Left cardiac atrium (tissue), 4 donors: ENCODE measurements at regions of chr1 and their contacts with region 1.

Region 1: GRCh38 chr1:207181838-207182237 is 77.8 kb downstream of the C4BPA start:
- DNase-seq: no peak
- ATAC-seq: peak in 1 of 2 donors; percentile 53

Region 2: GRCh38 chr1:207088731-207089626 is 92.9 kb before region 1 on chr1 and contains the start of gene C4BPB:
- intact Hi-C with region 1: no loop called
- DNase-seq: no peak
- ATAC-seq: peak in 1 of 2 donors; percentile 69
- total RNA-seq, gene C4BPB: 2.4 TPM in 1 of 2 donors, not detected in the other

Region 3: DNA sequence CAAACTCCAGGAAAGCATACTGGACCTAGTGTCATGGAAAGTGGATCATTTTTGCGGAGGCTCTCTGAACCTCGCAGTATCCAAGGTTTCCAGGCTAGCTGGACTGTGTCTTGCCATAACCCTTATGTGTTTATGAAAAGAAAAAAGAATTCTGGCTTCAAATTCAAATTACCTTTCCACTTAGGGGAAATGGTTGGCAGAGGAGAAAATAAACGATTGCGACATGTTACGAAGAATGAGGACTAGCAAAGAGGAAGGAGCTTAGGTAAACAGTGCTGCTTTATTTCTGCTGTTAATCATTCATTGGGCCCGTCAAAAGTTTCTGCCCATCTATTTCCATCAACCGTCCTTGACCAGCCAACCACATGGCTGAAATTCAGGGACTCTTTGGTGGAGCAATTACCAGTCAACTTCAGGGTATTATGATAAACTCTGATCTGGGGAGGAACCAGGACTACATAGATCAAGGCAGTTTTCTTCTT is 77.9 kb before region 1 on chr1 and contains the start of gene C4BPA:
- intact Hi-C with region 1: no loop called
- DNase-seq: no peak
- ATAC-seq: no peak
- total RNA-seq, gene C4BPA: not detected

Region 4: DNA sequence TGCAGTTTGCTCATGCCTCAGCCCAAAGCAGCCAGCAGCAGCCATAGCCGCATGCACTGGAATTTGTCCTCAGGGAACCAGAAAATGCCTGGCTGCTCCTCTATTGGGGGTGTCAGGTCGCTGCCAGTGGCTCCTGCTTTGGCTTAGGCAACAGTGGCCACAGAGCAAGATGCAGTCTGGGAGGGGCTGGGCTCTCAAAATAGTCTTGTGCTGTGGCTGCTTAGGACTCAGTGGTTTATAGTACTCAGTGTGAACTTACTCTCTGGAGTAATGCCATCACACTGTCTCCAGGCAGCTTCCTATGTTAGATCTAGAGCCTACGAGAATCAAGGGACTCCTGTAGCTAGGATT is 164.7 kb after region 1 on chr1:
- intact Hi-C with region 1: no loop called
- DNase-seq: no peak
- ATAC-seq: peak; percentile 47 to 63

Region 5: GRCh38 chr1:207404849-207405525 is 223.1 kb after region 1 on chr1:
- intact Hi-C with region 1: loop called (anchors 5 to 10 kb)
- DNase-seq: no peak
- ATAC-seq: peak; percentile 53 to 75